ENCODE measurements at regions of chr9 and their contacts with region 1.

Region 1: GRCh38 chr9:18331808-18332209 is 142.1 kb upstream of the ADAMTSL1 start:
- DNase-seq: no peak
- H3K4me3 ChIP-seq: no peak overlapping the region
- H3K27ac ChIP-seq: no peak overlapping the region
- H3K27me3 ChIP-seq: no peaks in the 10 kb centered on the region
- CTCF ChIP-seq: no peak

Region 2: GRCh38 chr9:18362901-18363685 is 31.3 kb after region 1 on chr9:
- intact Hi-C with region 1: no loop called
- DNase-seq: peak in 1 of 10 donors; percentile 22
- H3K4me3 ChIP-seq: no peak overlapping the region
- H3K27ac ChIP-seq: peak overlapping the region in 1 of 59 donors; percentile 64
- H3K27me3 ChIP-seq: no peaks in the 10 kb centered on the region
- CTCF ChIP-seq: no peak

Region 3: DNA sequence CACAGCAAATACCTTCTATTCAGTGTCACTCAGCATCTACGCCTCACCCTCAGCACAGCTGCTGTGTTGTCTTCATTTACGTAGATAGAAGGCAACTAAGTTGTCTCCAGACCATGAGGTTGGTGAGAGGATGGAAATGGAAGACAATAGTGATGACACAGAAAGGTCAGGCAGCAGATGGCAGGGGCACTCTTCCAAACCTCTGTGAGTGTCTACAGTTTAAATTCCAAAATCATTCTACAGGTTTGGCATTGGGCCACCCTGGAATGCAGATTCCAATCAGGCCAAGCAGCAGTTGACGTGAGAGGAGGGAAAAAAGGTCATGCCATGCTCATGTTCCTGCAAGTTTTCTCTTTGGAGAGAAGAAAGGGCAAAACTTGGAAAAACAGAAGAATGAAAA is 73.4 kb after region 1 on chr9:
- intact Hi-C with region 1: loop called in 1 of 2 experiments (anchors 10 kb)
- DNase-seq: peak in 1 of 10 donors; percentile 6
- H3K4me3 ChIP-seq: no peak overlapping the region
- H3K27ac ChIP-seq: no peak overlapping the region
- H3K27me3 ChIP-seq: no peaks in the 10 kb centered on the region
- CTCF ChIP-seq: no peak

Measured in dorsolateral prefrontal cortex (tissue), 120 donors.